T-cell (primary cell): ENCODE measurements at regions of chr4 and their contacts with region 1.

Region 1: GRCh38 chr4:182938205-182938645 is 21.0 kb upstream of the DCTD start:
- DNase-seq: peak in 34 of 35 experiments; percentile 10 to 72 (median 48)
- ATAC-seq: peak; percentile 90 to 97 (median 93)
- H3K4me3 ChIP-seq: no peak overlapping the region
- H3K4me3 Mint-ChIP-seq: no peak overlapping the region
- H3K27ac ChIP-seq: no peak overlapping the region
- H3K27ac Mint-ChIP-seq: no peak overlapping the region
- H3K4me1 ChIP-seq: peaks cover 0 to 3% of the 10 kb centered on the region in 2 experiments
- H3K4me1 Mint-ChIP-seq: peaks cover 0 to 6% (median 0%) of the 10 kb centered on the region in 3 donors
- H3K27me3 ChIP-seq: peaks cover 0 to 11% of the 10 kb centered on the region in 2 experiments
- H3K27me3 Mint-ChIP-seq: peaks cover 12 to 15% of the 10 kb centered on the region in 2 donors

Region 2: GRCh38 chr4:182917182-182918043 is 20.8 kb before region 1 on chr4 and contains the start of gene DCTD:
- CTCF ChIA-PET with region 1: interaction called, 8 to 12 read pairs
- POLR2A ChIA-PET with region 1: no interaction called
- DNase-seq: peak; percentile 59 to 86 (median 75)
- ATAC-seq: peak; percentile 82 to 85 (median 84)
- H3K4me3 ChIP-seq: peak within 1 kb of the TSS; percentile 75 to 87
- H3K4me3 Mint-ChIP-seq: peak within 1 kb of the TSS; percentile 83 to 90 (median 89)
- H3K27ac ChIP-seq: peak within 1 kb of the TSS; percentile 98
- H3K27ac Mint-ChIP-seq: peak within 1 kb of the TSS; percentile 93 to 95
- H3K4me1 ChIP-seq: peaks cover 14 to 35% of the 10 kb centered on the region in 2 experiments
- H3K4me1 Mint-ChIP-seq: peaks cover 46 to 54% (median 53%) of the 10 kb centered on the region in 3 donors
- H3K27me3 ChIP-seq: no peaks in the 10 kb centered on the region
- H3K27me3 Mint-ChIP-seq: no peaks in the 10 kb centered on the region
- total RNA-seq, gene DCTD: 55.3 to 78.7 (median 68.8) TPM

Region 3: GRCh38 chr4:183080372-183081115 is 142.3 kb after region 1 on chr4:
- CTCF ChIA-PET with region 1: no interaction called
- POLR2A ChIA-PET with region 1: no interaction called
- DNase-seq: no peak
- ATAC-seq: no peak
- H3K4me3 ChIP-seq: no peak overlapping the region
- H3K4me3 Mint-ChIP-seq: no peak overlapping the region
- H3K27ac ChIP-seq: no peak overlapping the region
- H3K27ac Mint-ChIP-seq: no peak overlapping the region
- H3K4me1 ChIP-seq: no peaks in the 10 kb centered on the region
- H3K4me1 Mint-ChIP-seq: no peaks in the 10 kb centered on the region
- H3K27me3 ChIP-seq: no peaks in the 10 kb centered on the region
- H3K27me3 Mint-ChIP-seq: no peaks in the 10 kb centered on the region

Region 4: GRCh38 chr4:183261953-183262775 is 323.9 kb after region 1 on chr4:
- CTCF ChIA-PET with region 1: interaction called, 11 to 28 read pairs
- POLR2A ChIA-PET with region 1: no interaction called
- DNase-seq: peak; percentile 30 to 79 (median 63)
- ATAC-seq: peak; percentile 87 to 93 (median 90)
- H3K4me3 ChIP-seq: no peak overlapping the region
- H3K4me3 Mint-ChIP-seq: no peak overlapping the region
- H3K27ac ChIP-seq: peak overlapping the region; percentile 34
- H3K27ac Mint-ChIP-seq: peak overlapping the region; percentile 81 to 87
- H3K4me1 ChIP-seq: peaks cover 3 to 5% of the 10 kb centered on the region in 2 experiments
- H3K4me1 Mint-ChIP-seq: peaks cover 6 to 10% (median 7%) of the 10 kb centered on the region in 3 donors
- H3K27me3 ChIP-seq: peaks cover 0 to 3% of the 10 kb centered on the region in 2 experiments
- H3K27me3 Mint-ChIP-seq: no peaks in the 10 kb centered on the region